Caco-2 (cell line): ENCODE measurements at regions of chr9 and their contacts with region 1.

Region 1: GRCh38 chr9:37437621-37438020 is 15.1 kb downstream of the GRHPR start:
- DNase-seq: no peak
- H3K4me3 ChIP-seq: no peak overlapping the region
- H3K4me3 Mint-ChIP-seq: no peak overlapping the region
- H3K27ac Mint-ChIP-seq: no peak overlapping the region
- H3K4me1 ChIP-seq: no peaks in the 10 kb centered on the region
- H3K4me1 Mint-ChIP-seq: no peaks in the 10 kb centered on the region
- H3K27me3 ChIP-seq: no peaks in the 10 kb centered on the region
- H3K27me3 Mint-ChIP-seq: no peaks in the 10 kb centered on the region
- CTCF ChIP-seq: no peak

Region 2: GRCh38 chr9:37407470-37407869 is 30.2 kb before region 1 on chr9:
- CTCF ChIA-PET with region 1: interaction called, 13 read pairs
- POLR2A ChIA-PET with region 1: no interaction called
- intact Hi-C with region 1: no loop called
- DNase-seq: no peak
- H3K4me3 ChIP-seq: no peak overlapping the region
- H3K4me3 Mint-ChIP-seq: no peak overlapping the region
- H3K27ac Mint-ChIP-seq: no peak overlapping the region
- H3K4me1 ChIP-seq: peaks cover 17% of the 10 kb centered on the region
- H3K4me1 Mint-ChIP-seq: peaks cover 28% of the 10 kb centered on the region
- H3K27me3 ChIP-seq: no peaks in the 10 kb centered on the region
- H3K27me3 Mint-ChIP-seq: no peaks in the 10 kb centered on the region
- CTCF ChIP-seq: peak in 1 of 2 experiments; percentile 21

Region 3: GRCh38 chr9:37449862-37450632 is 12.4 kb after region 1 on chr9:
- CTCF ChIA-PET with region 1: no interaction called
- POLR2A ChIA-PET with region 1: no interaction called
- intact Hi-C with region 1: no loop called
- DNase-seq: no peak
- H3K4me3 ChIP-seq: no peak overlapping the region
- H3K4me3 Mint-ChIP-seq: no peak overlapping the region
- H3K27ac Mint-ChIP-seq: no peak overlapping the region
- H3K4me1 ChIP-seq: peaks cover 13% of the 10 kb centered on the region; the same call in 1 of the 2 replicates
- H3K4me1 Mint-ChIP-seq: peaks cover 11% of the 10 kb centered on the region
- H3K27me3 ChIP-seq: no peaks in the 10 kb centered on the region
- H3K27me3 Mint-ChIP-seq: no peaks in the 10 kb centered on the region
- CTCF ChIP-seq: no peak